ENCODE measurements at regions of chr6 and their contacts with region 1.

Region 1: DNA sequence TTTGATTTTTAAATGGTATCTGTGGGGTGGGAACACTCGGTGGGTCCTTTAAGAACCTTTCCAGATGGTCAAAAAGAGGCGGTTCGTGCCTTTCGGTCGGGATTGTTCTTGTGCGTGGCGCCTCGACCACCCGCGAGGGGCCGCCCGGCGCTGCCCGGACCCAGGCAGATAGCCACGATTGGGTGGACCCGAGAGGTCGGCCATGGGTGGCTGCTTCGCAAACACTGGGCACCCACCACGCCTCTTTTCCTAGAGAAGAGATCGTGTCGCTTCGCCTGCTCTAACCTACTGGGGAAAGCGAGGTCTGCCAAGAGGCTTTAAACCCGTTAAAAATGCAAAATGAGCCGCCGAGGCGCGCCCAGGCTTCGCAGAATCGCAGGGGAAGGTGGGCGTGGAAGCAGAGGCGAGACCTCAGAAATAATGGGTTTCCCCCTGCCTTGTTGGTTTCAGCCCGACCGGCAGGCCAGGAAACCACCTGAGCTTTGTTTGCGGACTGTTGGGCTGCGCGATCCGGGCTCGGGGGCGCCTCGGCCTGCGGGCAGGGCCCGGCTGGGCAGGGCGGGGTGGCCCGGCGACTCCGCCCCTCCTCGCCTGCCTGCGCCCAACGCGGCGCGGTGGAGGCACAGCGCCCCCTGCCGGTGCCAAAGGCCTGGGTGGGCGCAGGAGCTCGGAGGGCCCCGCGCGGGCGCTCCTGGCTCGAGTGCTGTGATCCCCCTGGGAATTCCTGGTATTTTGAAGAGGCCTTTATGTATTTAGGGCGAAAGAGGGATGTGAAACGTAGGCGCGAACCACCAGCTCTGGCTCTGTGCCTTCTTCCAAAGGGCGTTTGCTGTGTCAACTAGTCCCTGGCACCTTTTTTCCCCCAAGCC is 1.6 kb downstream of the MARCKS start:
- DNase-seq: peak; percentile 95
- H3K4me3 ChIP-seq: peak overlapping the region; percentile 99 to 100
- H3K27ac ChIP-seq: peak overlapping the region; percentile 99
- H3K4me1 ChIP-seq: peaks cover 8 to 22% of the 10 kb centered on the region in 2 experiments
- H3K27me3 ChIP-seq: no peaks in the 10 kb centered on the region
- CTCF ChIP-seq: peak; percentile 87
- EP300 ChIP-seq: peak in 1 of 2 experiments; percentile 38; a peak in 1 of 4 replicates
- RAD21 ChIP-seq: peak; percentile 85

Region 2: GRCh38 chr6:112786801-112787200 is 1071.9 kb before region 1 on chr6:
- CTCF ChIA-PET with region 1: interaction called, 23 read pairs
- POLR2A ChIA-PET with region 1: interaction called, 3 read pairs
- DNase-seq: no peak
- H3K4me3 ChIP-seq: no peak overlapping the region
- H3K27ac ChIP-seq: peak overlapping the region; percentile 47 to 86; a peak in 3 of 4 replicates
- H3K4me1 ChIP-seq: no peaks in the 10 kb centered on the region; a peak in 1 of 4 replicates
- H3K27me3 ChIP-seq: no peaks in the 10 kb centered on the region
- CTCF ChIP-seq: no peak
- EP300 ChIP-seq: peak; percentile 63 to 98
- RAD21 ChIP-seq: no peak

Region 3: GRCh38 chr6:113610377-113610988 is 248.2 kb before region 1 on chr6:
- CTCF ChIA-PET with region 1: interaction called, 24 read pairs
- POLR2A ChIA-PET with region 1: interaction called, 7 read pairs
- DNase-seq: peak; percentile 13
- H3K4me3 ChIP-seq: no peak overlapping the region
- H3K27ac ChIP-seq: peak overlapping the region; percentile 38 to 92; a peak in 3 of 4 replicates
- H3K4me1 ChIP-seq: peaks cover 4 to 10% of the 10 kb centered on the region in 2 experiments; a peak in 2 of 4 replicates
- H3K27me3 ChIP-seq: no peaks in the 10 kb centered on the region
- CTCF ChIP-seq: no peak
- EP300 ChIP-seq: peak in 1 of 2 experiments; percentile 58; a peak in 2 of 4 replicates
- RAD21 ChIP-seq: peak; percentile 33; the same call in 1 of the 2 replicates

Region 4: GRCh38 chr6:113847447-113847846 is 11.3 kb before region 1 on chr6:
- CTCF ChIA-PET with region 1: interaction called, 11 read pairs
- POLR2A ChIA-PET with region 1: interaction called, 4 read pairs
- DNase-seq: no peak
- H3K4me3 ChIP-seq: no peak overlapping the region
- H3K27ac ChIP-seq: peak overlapping the region in 1 of 2 experiments; percentile 69; a peak in 2 of 4 replicates
- H3K4me1 ChIP-seq: peaks cover 0 to 9% of the 10 kb centered on the region in 2 experiments; a peak in 1 of 4 replicates
- H3K27me3 ChIP-seq: no peaks in the 10 kb centered on the region
- CTCF ChIP-seq: no peak
- EP300 ChIP-seq: no peak
- RAD21 ChIP-seq: no peak

Region 5: DNA sequence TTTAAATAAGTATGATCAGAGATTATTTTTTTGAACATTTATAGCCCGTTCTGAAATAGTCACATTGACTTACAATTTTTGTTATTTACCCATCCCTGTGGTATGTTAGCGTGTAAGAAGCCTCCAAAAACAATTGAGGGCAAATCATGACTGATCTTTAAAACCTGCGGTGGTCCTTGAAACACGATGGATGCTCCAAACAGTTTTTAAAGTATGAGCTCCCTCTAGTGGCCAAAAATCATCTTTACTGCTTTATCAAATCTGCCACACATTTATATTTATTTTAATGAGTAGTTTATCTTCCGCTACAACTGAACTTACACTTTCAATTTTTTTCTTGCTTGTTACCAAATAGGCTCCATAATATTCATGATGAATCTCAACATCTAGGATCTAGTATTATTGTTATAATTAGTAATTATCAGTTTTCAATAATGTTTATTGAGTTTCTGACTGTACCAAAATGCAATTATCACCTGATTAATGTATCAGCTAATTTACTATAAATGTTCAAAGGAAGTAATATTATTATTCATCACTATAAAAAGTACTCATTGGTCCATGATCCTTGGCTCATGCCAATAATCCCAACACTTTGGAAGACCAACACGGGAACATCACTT is 50.6 kb after region 1 on chr6:
- CTCF ChIA-PET with region 1: interaction called, 14 read pairs
- POLR2A ChIA-PET with region 1: no interaction called
- DNase-seq: peak; percentile 63
- H3K4me3 ChIP-seq: peak overlapping the region in 1 of 2 experiments; percentile 36; a peak in 1 of 4 replicates
- H3K27ac ChIP-seq: no peak overlapping the region
- H3K4me1 ChIP-seq: peaks cover 0 to 2% of the 10 kb centered on the region in 2 experiments; a peak in 1 of 4 replicates
- H3K27me3 ChIP-seq: no peaks in the 10 kb centered on the region
- CTCF ChIP-seq: peak; percentile 81
- EP300 ChIP-seq: no peak
- RAD21 ChIP-seq: peak; percentile 87